Dendritic cell treated with granulocyte-macrophage colony-stimulating factor and Interleukin-4, amounts not matched to agents 40 ng/mL and 50 ng/mL, for 4 days (primary cell): ENCODE measurements at regions of chr17 and their contacts with region 1.

Region 1: DNA sequence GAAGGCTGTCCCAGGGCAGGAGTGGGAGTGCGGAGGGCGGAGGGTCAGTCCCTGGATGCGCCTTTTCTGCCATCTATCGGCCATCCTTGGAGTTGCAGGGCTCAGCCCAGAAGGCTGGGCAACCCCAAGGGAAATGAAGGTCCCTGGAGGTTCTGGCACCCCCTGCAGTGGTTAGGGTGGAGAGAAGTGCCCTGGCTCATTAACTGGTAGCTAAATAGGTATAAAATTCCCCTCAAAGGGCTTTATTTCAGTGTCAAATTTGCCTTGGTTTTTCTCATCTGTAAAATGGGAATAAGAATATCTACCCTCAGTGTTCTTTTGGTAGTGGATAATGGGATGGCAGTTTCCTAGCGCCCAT is 22.4 kb downstream of the C17orf75 start:
- H3K4me3 Mint-ChIP-seq: peak overlapping the region; percentile 83
- H3K27ac Mint-ChIP-seq: peak overlapping the region; percentile 88
- H3K4me1 Mint-ChIP-seq: peaks cover 81% of the 10 kb centered on the region
- H3K27me3 Mint-ChIP-seq: peaks cover 10% of the 10 kb centered on the region

Region 2: GRCh38 chr17:32253117-32253611 is 66.4 kb before region 1 on chr17:
- intact Hi-C with region 1: loop called (anchors 1 kb)
- H3K4me3 Mint-ChIP-seq: no peak overlapping the region
- H3K27ac Mint-ChIP-seq: no peak overlapping the region
- H3K4me1 Mint-ChIP-seq: peaks cover 6% of the 10 kb centered on the region
- H3K27me3 Mint-ChIP-seq: peaks cover 35% of the 10 kb centered on the region

Region 3: DNA sequence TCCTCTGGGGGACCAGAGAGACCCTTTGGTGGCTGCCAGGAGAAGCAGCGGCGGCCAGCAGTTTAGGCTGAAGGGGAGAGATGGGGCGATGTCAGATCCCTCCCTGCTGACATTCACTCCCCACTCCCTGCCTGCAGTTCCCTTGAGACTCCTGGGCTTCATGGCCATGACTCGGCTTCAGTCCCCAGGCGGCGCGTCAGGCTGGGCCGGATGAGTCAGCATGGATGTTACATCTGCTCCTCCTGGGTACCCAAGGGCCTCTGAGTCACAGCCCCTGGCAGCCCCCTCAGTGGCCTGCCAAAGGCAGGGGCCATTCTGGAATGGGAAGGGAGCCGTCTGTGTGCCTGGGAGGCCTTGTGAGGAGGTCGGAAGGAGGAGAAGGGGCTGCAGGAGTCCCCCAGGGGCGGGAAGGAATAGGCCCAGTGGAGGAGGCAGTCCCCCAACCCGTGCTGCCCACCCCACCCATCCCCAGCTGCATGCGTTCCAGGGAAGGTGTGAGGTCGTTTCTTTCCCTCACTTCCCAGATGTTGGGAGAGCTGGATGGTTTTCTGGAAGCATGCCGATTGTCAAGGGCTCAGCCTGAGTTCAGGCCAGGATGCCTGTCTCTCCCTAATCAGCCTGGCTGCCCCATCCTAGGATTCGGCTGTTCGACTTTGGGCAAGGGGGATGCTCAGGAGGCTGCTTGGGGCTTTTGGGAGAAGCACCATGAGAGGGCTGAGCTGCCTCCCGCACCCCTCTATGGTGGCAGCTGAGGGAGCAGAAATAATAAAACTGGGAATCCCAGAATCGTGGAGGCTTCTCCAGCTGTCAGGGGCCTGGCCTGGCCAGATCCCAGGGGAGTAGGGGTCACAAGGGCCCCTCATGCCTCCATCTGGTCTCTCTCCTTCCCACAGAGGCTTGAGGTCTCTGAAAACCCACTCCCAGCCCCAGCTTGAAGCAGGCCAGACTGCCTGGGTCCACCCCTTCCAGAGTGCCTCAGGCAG is 44.2 kb before region 1 on chr17:
- intact Hi-C with region 1: loop called (anchors 5 kb)
- H3K4me3 Mint-ChIP-seq: no peak overlapping the region
- H3K27ac Mint-ChIP-seq: peak overlapping the region; percentile 62
- H3K4me1 Mint-ChIP-seq: peaks cover 44% of the 10 kb centered on the region
- H3K27me3 Mint-ChIP-seq: peaks cover 70% of the 10 kb centered on the region

Region 4: DNA sequence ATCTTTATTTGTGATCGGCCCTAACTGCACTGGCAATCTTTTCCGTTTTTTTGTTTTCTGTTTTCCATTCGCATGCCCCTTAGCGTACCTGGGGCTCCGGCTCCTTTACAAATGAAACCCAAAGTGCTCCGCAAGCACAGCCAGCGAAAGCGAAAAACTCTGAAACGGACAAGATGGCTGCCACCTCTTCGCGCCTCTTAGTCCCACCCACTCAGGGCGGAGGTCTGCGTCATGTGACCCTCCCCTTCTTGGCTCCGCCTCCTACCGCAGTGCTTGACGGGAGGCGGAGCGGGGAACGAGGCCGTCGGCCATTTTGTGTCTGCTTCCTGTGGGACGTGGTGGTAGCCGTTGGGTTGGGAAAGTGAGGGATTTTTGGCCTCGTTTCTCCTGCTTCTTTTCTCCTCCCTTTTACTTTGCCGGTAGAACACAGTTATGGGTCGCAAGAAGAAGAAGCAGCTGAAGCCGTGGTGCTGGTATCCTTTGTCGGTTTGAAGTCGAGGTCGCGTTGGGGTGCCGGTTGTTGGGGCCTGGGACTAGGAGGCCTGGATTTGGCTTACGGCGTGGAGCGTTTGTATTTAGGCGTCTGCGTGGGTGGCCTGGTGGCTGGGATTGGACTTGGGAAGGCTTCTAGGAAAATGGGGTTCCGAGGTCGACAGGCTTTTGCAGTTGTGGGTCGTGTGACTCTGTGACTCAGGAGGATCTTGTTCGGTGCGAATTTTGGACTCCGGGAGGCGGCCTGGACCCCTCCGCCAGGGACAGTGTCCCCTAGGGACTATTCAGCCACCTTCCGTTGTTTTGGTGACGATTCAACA is 30.5 kb after region 1 on chr17 and contains the start of gene ZNF207:
- intact Hi-C with region 1: loop called (anchors 2 kb)
- H3K4me3 Mint-ChIP-seq: peak within 1 kb of the TSS; percentile 91
- H3K27ac Mint-ChIP-seq: peak within 1 kb of the TSS; percentile 94
- H3K4me1 Mint-ChIP-seq: peaks cover 37% of the 10 kb centered on the region
- H3K27me3 Mint-ChIP-seq: no peaks in the 10 kb centered on the region